ENCODE measurements at regions of chr12 and their contacts with region 1.

Region 1: GRCh38 chr12:112012775-112013600 is at the starts of genes ERP29 and TMEM116:
- DNase-seq: peak; percentile 98
- ATAC-seq: peak; percentile 82
- H3K4me3 ChIP-seq: peak within 1 kb of the TSS; percentile 97
- H3K27ac ChIP-seq: peak within 1 kb of the TSS; percentile 97
- H3K4me1 ChIP-seq: peaks cover 16% of the 10 kb centered on the region; the same call in 1 of the 2 replicates
- H3K27me3 ChIP-seq: no peaks in the 10 kb centered on the region
- CTCF ChIP-seq: peak; percentile 45 to 58 (median 50); a peak in 5 of 6 replicates
- EP300 ChIP-seq: 0 out of 4 replicates have a peak, but pooled peaks of 1 of the 2 experiments have one; percentile 10
- POLR2A ChIP-seq: peak; percentile 89
- RAD21 ChIP-seq: peak; percentile 34
- polyA plus RNA-seq, gene ERP29: 47.1 to 119 TPM
- polyA plus RNA-seq, gene TMEM116: 7.9 to 13.5 TPM

Region 2: GRCh38 chr12:111993292-111994150 is 19.5 kb before region 1 on chr12:
- CTCF ChIA-PET with region 1: interaction called, 18 read pairs
- POLR2A ChIA-PET with region 1: interaction called, 9 read pairs
- RAD21 ChIA-PET with region 1: interaction called, 50 read pairs
- SMC1A ChIA-PET with region 1: interaction called, 51 read pairs
- in situ Hi-C with region 1: no loop called
- intact Hi-C with region 1: loop called (anchors 1 kb)
- DNase-seq: peak; percentile 43
- ATAC-seq: peak; percentile 85
- H3K4me3 ChIP-seq: peak overlapping the region; percentile 49
- H3K27ac ChIP-seq: no peak overlapping the region
- H3K4me1 ChIP-seq: peaks cover 32% of the 10 kb centered on the region
- H3K27me3 ChIP-seq: no peaks in the 10 kb centered on the region
- CTCF ChIP-seq: no peak
- EP300 ChIP-seq: no peak
- POLR2A ChIP-seq: no peak
- RAD21 ChIP-seq: no peak

Region 3: DNA sequence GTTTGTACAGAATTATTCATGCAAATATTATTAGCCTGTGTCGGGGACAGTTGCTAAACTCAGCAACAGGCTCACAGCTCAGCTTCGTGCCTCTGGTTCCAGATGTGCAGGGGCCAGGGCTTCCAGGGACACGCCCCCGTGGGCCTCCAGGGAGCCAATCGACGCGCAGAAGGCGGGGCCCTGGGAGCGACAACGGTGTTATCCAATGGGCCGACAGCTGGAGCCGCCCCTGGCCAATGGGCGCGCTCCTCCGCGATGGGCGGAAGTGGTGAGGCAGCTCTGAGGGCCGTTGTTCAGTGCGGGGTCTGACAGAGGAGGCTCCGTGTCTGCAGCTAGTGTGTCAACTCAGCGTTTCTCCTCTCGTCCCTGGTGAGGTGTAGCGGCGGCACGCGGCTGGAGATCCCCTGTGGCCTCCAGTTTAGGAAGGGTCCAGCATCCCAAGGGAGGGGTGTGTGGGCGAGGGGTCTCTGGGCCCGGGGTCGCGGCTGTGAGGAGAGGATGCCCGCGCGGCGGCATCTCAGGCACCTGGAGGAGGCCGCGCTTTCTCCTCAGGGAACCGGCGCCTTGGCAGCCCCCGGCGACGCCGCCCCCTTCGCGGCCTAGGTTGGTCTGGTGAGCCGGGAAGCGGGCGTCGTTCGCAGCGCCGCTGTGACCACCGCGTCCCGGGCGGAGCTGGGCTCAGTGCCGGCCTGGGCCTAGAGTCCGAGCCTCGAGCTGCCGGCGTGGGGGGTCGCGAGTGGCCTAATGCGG is 112.4 kb after region 1 on chr12 and contains the start of gene TRAFD1:
- CTCF ChIA-PET with region 1: interaction called, 4 read pairs
- POLR2A ChIA-PET with region 1: interaction called, 17 read pairs
- RAD21 ChIA-PET with region 1: interaction called, 24 read pairs
- SMC1A ChIA-PET with region 1: interaction called, 28 read pairs
- in situ Hi-C with region 1: no loop called
- intact Hi-C with region 1: loop called (anchors 5 kb)
- DNase-seq: peak; percentile 92
- ATAC-seq: peak; percentile 99
- H3K4me3 ChIP-seq: peak within 1 kb of the TSS; percentile 98
- H3K27ac ChIP-seq: peak within 1 kb of the TSS; percentile 72
- H3K4me1 ChIP-seq: peaks cover 19% of the 10 kb centered on the region
- H3K27me3 ChIP-seq: no peaks in the 10 kb centered on the region
- CTCF ChIP-seq: no peak
- EP300 ChIP-seq: no peak
- POLR2A ChIP-seq: peak; percentile 100
- RAD21 ChIP-seq: no peak
- polyA plus RNA-seq, gene TRAFD1: 42.3 to 43.8 TPM

Measured in GM12878 (cell line).